CD4-positive, alpha-beta memory T cell (primary cell): ENCODE measurements at regions of chr2 and their contacts with region 1.

Region 1: DNA sequence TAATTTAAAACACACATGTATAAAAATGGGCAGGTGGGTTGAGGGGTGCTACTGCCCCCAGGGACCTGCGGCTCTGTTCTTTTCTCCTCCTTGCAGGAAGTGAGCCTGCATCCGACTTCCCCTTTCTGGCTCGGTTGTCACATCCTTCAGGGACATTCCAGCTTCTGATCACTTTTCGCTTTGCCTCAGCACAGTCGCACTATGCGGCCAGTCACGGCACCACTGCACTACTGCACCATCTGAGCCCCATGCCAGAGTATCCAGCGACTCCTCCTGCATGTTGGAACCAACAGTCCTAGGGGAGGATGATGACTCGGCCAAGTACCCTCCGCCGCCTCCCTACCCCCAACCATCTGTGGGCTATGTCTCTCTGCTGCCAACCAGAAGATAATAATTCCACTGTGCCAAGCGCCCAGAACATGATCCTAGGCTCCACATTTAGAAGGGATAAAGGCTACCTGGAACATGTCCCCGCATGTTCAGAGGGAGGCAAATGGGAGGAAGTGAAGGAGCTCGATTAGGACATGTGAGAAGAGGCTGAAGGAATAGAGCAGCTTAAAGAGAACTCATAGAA is 17.6 kb downstream of the CDC42EP3 start:
- DNase-seq: no peak
- H3K4me3 ChIP-seq: no peak overlapping the region
- H3K4me3 Mint-ChIP-seq: peak overlapping the region in 7 of 8 donors; percentile 48 to 76 (median 70)
- H3K27ac ChIP-seq: peak overlapping the region; percentile 63
- H3K27ac Mint-ChIP-seq: peak overlapping the region; percentile 78 to 96 (median 89)
- H3K4me1 ChIP-seq: peaks cover 96% of the 10 kb centered on the region
- H3K4me1 Mint-ChIP-seq: peaks cover 80 to 98% (median 88%) of the 10 kb centered on the region in 4 donors
- H3K27me3 ChIP-seq: no peaks in the 10 kb centered on the region
- H3K27me3 Mint-ChIP-seq: no peaks in the 10 kb centered on the region

Region 2: GRCh38 chr2:37641582-37642171 is 12.2 kb before region 1 on chr2:
- CTCF ChIA-PET with region 1: interaction called, 17 read pairs
- POLR2A ChIA-PET with region 1: interaction called, 26 read pairs
- intact Hi-C with region 1: loop called (anchors 2 kb)
- DNase-seq: no peak
- H3K4me3 ChIP-seq: no peak overlapping the region
- H3K4me3 Mint-ChIP-seq: peak overlapping the region in 1 of 8 donors; percentile 22
- H3K27ac ChIP-seq: no peak overlapping the region
- H3K27ac Mint-ChIP-seq: peak overlapping the region in 5 of 7 donors; percentile 0 to 89 (median 81)
- H3K4me1 ChIP-seq: peaks cover 82% of the 10 kb centered on the region
- H3K4me1 Mint-ChIP-seq: peaks cover 60 to 93% (median 79%) of the 10 kb centered on the region in 4 donors
- H3K27me3 ChIP-seq: no peaks in the 10 kb centered on the region
- H3K27me3 Mint-ChIP-seq: no peaks in the 10 kb centered on the region

Region 3: GRCh38 chr2:37664231-37664643 is 10.3 kb after region 1 on chr2:
- CTCF ChIA-PET with region 1: interaction called, 26 read pairs
- POLR2A ChIA-PET with region 1: interaction called, 77 read pairs
- intact Hi-C with region 1: loop called (anchors 1 kb)
- DNase-seq: no peak
- H3K4me3 ChIP-seq: no peak overlapping the region
- H3K4me3 Mint-ChIP-seq: peak overlapping the region in 6 of 8 donors; percentile 11 to 57 (median 28)
- H3K27ac ChIP-seq: no peak overlapping the region
- H3K27ac Mint-ChIP-seq: peak overlapping the region; percentile 20 to 96 (median 78)
- H3K4me1 ChIP-seq: peaks cover 98% of the 10 kb centered on the region
- H3K4me1 Mint-ChIP-seq: peaks cover 75 to 99% (median 87%) of the 10 kb centered on the region in 4 donors
- H3K27me3 ChIP-seq: no peaks in the 10 kb centered on the region
- H3K27me3 Mint-ChIP-seq: no peaks in the 10 kb centered on the region